ENCODE measurements at regions of chr9 and their contacts with region 1.

Region 1: GRCh38 chr9:129177791-129178559 is at the start of gene IER5L:
- DNase-seq: peak; percentile 96
- ATAC-seq: peak; percentile 88
- H3K4me3 Mint-ChIP-seq: peak within 1 kb of the TSS; percentile 83
- H3K27ac Mint-ChIP-seq: peak within 1 kb of the TSS; percentile 65
- H3K4me1 Mint-ChIP-seq: peaks cover 7% of the 10 kb centered on the region
- H3K27me3 Mint-ChIP-seq: peaks cover 3% of the 10 kb centered on the region
- total RNA-seq, gene IER5L: 2.6 to 2.8 TPM

Region 2: DNA sequence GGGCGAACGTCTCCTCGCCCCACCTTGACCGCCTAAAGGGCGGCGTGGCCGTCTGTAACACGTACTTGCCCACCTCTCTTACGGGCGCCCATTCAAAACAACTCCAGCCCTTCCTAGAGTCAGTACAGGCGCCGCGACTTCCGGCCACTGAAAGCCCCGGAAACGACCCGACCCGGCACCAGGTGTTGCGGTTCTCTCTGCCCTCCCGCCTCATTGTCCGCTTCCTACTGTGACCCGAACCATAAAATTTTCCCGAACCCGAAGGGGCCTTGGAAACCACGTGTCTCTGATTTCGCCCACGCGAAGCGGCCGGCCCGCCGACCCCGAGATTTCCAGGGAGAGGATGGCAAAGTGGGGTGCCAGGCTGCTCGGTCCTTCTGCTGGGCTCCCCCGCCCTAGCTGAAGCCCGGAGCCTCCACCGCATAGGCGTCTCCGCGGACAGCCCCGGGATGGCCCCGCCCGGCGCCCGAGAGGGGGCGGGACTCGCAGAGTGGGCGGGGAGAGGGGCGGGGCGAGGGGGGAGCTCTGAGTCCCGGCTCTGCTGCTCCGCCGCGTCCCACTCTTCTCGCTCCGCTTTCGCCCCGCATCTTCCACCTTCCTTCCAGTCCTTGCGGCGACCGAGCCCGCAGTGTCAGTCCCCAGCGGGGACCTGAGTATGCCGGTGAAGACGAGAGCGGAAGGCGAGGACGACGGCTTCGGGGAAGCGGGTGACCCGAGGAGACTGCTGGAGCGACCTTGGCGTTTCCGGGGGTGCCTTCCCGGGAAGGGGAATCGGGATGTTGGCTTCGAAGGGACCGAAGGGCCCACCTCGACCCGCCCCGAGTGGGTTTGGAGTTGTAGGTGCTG is 1049.8 kb before region 1 on chr9:
- CTCF ChIA-PET with region 1: no interaction called
- POLR2A ChIA-PET with region 1: no interaction called
- intact Hi-C with region 1: no loop called
- DNase-seq: peak; percentile 90
- ATAC-seq: peak; percentile 84
- H3K4me3 Mint-ChIP-seq: peak overlapping the region; percentile 96
- H3K27ac Mint-ChIP-seq: peak overlapping the region; percentile 96
- H3K4me1 Mint-ChIP-seq: peaks cover 29% of the 10 kb centered on the region
- H3K27me3 Mint-ChIP-seq: peaks cover 2% of the 10 kb centered on the region

Region 3: GRCh38 chr9:129080602-129081387 is 97.2 kb before region 1 on chr9 and contains the start of gene DOLPP1:
- CTCF ChIA-PET with region 1: no interaction called
- POLR2A ChIA-PET with region 1: no interaction called
- intact Hi-C with region 1: loop called in 1 of 2 experiments (anchors 1 kb)
- DNase-seq: peak; percentile 99
- ATAC-seq: peak; percentile 98
- H3K4me3 Mint-ChIP-seq: peak within 1 kb of the TSS; percentile 83
- H3K27ac Mint-ChIP-seq: peak within 1 kb of the TSS; percentile 63
- H3K4me1 Mint-ChIP-seq: peaks cover 20% of the 10 kb centered on the region
- H3K27me3 Mint-ChIP-seq: no peaks in the 10 kb centered on the region
- total RNA-seq, gene DOLPP1: 15.1 to 16.4 TPM

Region 4: GRCh38 chr9:129154866-129155477 is 23.0 kb before region 1 on chr9:
- CTCF ChIA-PET with region 1: no interaction called
- POLR2A ChIA-PET with region 1: no interaction called
- intact Hi-C with region 1: no loop called
- DNase-seq: no peak
- ATAC-seq: no peak
- H3K4me3 Mint-ChIP-seq: no peak overlapping the region
- H3K27ac Mint-ChIP-seq: no peak overlapping the region
- H3K4me1 Mint-ChIP-seq: no peaks in the 10 kb centered on the region
- H3K27me3 Mint-ChIP-seq: no peaks in the 10 kb centered on the region

Region 5: DNA sequence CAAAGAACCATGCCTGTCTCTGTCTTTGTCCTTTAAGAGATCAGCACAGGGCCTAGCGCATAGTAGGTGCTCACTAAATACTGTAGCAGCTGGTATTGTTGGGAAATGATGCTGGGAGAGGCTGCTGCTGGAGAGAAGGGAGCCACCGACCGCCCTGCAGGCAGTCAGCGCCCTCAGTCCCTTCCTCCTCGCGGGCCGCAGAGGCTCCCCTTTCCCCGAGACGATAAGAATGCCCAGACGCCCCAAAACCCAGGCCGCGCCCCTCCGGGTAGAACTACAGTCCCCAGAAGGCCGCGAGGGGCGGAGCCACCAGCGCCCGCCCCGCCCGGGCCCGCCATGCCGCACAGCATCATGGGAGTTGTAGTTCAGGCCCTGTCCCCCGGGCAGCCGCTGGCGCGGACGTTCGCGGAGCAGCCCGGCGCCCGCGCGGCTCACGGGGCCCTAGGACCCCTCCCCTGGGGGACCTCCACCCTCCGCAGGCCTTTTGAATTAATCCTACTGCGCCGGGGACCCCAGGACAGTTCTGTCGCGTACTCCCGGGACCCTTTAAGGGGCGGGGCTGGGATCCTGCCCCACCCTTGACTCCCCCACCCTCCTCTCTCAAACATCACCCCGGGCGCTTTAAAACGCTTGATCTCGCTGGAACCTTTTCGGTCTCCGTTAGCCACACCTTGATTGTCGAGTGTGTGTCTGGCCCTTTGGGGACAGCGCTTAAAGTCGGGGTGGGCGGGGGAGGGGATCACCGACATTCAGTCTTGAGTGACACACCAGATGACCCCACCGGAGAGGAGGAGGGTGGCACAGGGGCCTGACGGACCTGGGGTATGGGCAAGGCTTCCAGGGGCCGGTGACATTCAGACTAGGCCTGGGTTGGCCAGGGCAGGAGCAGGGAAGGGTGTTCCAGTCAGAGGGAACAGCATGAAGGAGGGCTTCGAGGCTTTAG is 24.9 kb after region 1 on chr9:
- CTCF ChIA-PET with region 1: interaction called, 3 read pairs
- POLR2A ChIA-PET with region 1: interaction called, 4 read pairs
- intact Hi-C with region 1: loop called (anchors 1 to 2 kb)
- DNase-seq: peak; percentile 95
- ATAC-seq: peak; percentile 95
- H3K4me3 Mint-ChIP-seq: peak overlapping the region; percentile 57
- H3K27ac Mint-ChIP-seq: peak overlapping the region; percentile 31
- H3K4me1 Mint-ChIP-seq: peaks cover 18% of the 10 kb centered on the region
- H3K27me3 Mint-ChIP-seq: peaks cover 3% of the 10 kb centered on the region

Region 6: GRCh38 chr9:129320575-129321263 is 142.7 kb after region 1 on chr9:
- CTCF ChIA-PET with region 1: interaction called, 3 read pairs
- POLR2A ChIA-PET with region 1: interaction called, 7 read pairs
- intact Hi-C with region 1: loop called (anchors 2 to 10 kb)
- DNase-seq: peak; percentile 71
- ATAC-seq: peak; percentile 84
- H3K4me3 Mint-ChIP-seq: peak overlapping the region; percentile 62
- H3K27ac Mint-ChIP-seq: peak overlapping the region; percentile 78
- H3K4me1 Mint-ChIP-seq: peaks cover 24% of the 10 kb centered on the region
- H3K27me3 Mint-ChIP-seq: no peaks in the 10 kb centered on the region

Region 7: GRCh38 chr9:129383561-129384416 is 205.8 kb after region 1 on chr9:
- CTCF ChIA-PET with region 1: no interaction called
- POLR2A ChIA-PET with region 1: no interaction called
- intact Hi-C with region 1: loop called in 1 of 2 experiments (anchors 1 kb)
- DNase-seq: peak; percentile 83
- ATAC-seq: peak; percentile 96
- H3K4me3 Mint-ChIP-seq: peak overlapping the region; percentile 59
- H3K27ac Mint-ChIP-seq: peak overlapping the region; percentile 58
- H3K4me1 Mint-ChIP-seq: peaks cover 8% of the 10 kb centered on the region
- H3K27me3 Mint-ChIP-seq: no peaks in the 10 kb centered on the region

Region 8: GRCh38 chr9:129482521-129483414 is 304.8 kb after region 1 on chr9:
- CTCF ChIA-PET with region 1: no interaction called
- POLR2A ChIA-PET with region 1: no interaction called
- intact Hi-C with region 1: loop called in 1 of 2 experiments (anchors 10 kb)
- DNase-seq: peak; percentile 51
- ATAC-seq: no peak
- H3K4me3 Mint-ChIP-seq: peak overlapping the region; percentile 60
- H3K27ac Mint-ChIP-seq: peak overlapping the region; percentile 47
- H3K4me1 Mint-ChIP-seq: peaks cover 43% of the 10 kb centered on the region
- H3K27me3 Mint-ChIP-seq: no peaks in the 10 kb centered on the region

Region 9: DNA sequence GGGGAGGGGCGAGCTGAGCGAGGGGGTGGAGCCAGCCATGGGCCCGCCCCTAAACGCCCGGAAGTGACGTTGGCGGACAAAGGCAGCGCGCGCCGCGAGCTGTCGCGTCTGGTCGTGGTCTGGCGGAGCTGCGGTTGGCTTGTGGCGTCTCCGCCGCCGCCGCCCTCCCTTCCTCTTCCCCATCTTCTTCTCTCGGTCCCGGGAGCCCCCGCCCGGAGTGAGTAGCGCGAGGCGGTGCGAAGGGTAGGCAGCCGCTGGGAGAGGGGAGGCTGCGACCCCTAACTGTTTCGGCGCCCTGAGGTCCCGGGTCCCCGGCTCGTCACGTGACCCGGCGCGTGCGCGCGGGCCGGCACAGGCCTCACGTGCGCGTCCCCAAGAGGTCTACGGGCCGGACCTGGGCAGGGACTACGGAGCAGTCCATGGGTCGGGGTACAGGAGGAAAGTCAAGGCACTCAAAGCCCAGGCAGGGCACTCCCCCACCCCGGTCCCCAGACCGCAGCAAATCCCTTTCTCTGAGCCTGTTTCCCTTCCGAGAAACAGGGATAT is 448.2 kb after region 1 on chr9 and contains the start of gene NTMT1:
- CTCF ChIA-PET with region 1: interaction called, 13 read pairs
- POLR2A ChIA-PET with region 1: interaction called, 8 read pairs
- intact Hi-C with region 1: loop called in 1 of 2 experiments (anchors 1 kb)
- DNase-seq: peak; percentile 95
- ATAC-seq: peak; percentile 76
- H3K4me3 Mint-ChIP-seq: peak within 1 kb of the TSS; percentile 77
- H3K27ac Mint-ChIP-seq: peak within 1 kb of the TSS; percentile 93
- H3K4me1 Mint-ChIP-seq: peaks cover 52% of the 10 kb centered on the region
- H3K27me3 Mint-ChIP-seq: peaks cover 4% of the 10 kb centered on the region
- total RNA-seq, gene NTMT1: 50.1 to 69.2 TPM

Measured in activated CD4-positive, alpha-beta T cell treated with anti-CD3 and anti-CD28 coated beads for 36 hours (primary cell).